Sigmoid colon (tissue), 7 donors: ENCODE measurements at regions of chr10 and their contacts with region 1.

Region 1: GRCh38 chr10:110137142-110137545 is 70.3 kb upstream of the MXI1 start:
- DNase-seq: no peak
- H3K4me3 ChIP-seq: no peak overlapping the region
- H3K27ac ChIP-seq: peak overlapping the region; percentile 34 to 63 (median 52)
- H3K4me1 ChIP-seq: peaks cover 0 to 12% (median 3%) of the 10 kb centered on the region in 4 donors
- H3K27me3 ChIP-seq: no peaks in the 10 kb centered on the region
- CTCF ChIP-seq: peak; percentile 71 to 97 (median 89)
- EP300 ChIP-seq: no peak
- POLR2A ChIP-seq: no peak

Region 2: DNA sequence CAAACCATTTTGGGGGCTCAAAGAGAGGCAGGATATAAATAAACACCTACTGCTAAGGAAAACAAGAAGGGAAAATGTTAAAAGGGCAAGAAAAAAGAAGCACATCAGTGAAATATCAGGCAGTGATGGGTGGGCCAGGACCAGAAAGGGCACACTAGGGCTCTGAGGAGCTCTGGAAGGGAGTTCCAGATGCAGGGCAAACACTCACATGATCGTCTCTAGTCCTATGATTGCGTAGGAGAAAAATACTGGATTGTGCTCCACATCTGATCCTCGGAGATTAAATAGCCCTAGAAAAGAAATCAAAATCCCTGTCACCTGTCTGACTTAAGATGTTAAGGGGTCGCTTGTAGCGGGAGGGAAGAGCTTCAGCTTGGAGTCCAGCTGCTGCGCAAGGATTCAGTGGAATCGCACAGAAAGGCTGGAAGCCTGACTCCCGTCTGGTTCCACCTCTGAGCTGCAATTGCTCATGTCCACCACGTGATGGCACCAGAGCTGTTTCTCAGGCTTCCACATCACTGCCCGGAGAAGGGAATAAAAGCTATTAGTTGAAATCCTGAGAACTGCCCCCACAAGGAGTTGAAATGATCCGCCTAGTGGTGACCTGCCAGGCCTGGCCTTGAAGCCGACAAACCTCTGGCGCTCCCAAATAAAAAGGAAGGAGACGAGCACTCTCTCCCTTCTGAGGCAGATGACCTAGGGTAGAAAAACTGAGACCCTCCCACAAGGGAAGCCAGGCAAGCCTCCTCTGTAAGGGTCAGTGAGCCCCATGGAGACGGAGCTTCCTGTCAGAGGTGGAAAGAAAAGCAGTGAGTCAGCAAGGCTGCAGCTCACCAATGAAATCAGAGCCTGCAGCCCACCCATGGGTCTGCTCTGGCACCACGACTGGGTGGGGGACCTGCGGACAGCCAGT is 253.0 kb before region 1 on chr10:
- intact Hi-C with region 1: loop called (anchors 5 kb)
- DNase-seq: peak; percentile 89
- H3K4me3 ChIP-seq: peak overlapping the region in 2 of 4 donors; percentile 1 to 10
- H3K27ac ChIP-seq: peak overlapping the region; percentile 23 to 55 (median 52)
- H3K4me1 ChIP-seq: peaks cover 0 to 12% (median 8%) of the 10 kb centered on the region in 4 donors
- H3K27me3 ChIP-seq: no peaks in the 10 kb centered on the region
- CTCF ChIP-seq: peak; percentile 80 to 96 (median 93)
- EP300 ChIP-seq: no peak
- POLR2A ChIP-seq: no peak

Region 3: GRCh38 chr10:110016039-110016438 is 121.1 kb before region 1 on chr10:
- intact Hi-C with region 1: loop called (anchors 10 kb)
- DNase-seq: no peak
- H3K4me3 ChIP-seq: no peak overlapping the region
- H3K27ac ChIP-seq: no peak overlapping the region
- H3K4me1 ChIP-seq: peaks cover 0 to 38% (median 19%) of the 10 kb centered on the region in 4 donors
- H3K27me3 ChIP-seq: no peaks in the 10 kb centered on the region
- CTCF ChIP-seq: peak in 2 of 4 experiments; percentile 15 to 30
- EP300 ChIP-seq: no peak
- POLR2A ChIP-seq: no peak

Region 4: DNA sequence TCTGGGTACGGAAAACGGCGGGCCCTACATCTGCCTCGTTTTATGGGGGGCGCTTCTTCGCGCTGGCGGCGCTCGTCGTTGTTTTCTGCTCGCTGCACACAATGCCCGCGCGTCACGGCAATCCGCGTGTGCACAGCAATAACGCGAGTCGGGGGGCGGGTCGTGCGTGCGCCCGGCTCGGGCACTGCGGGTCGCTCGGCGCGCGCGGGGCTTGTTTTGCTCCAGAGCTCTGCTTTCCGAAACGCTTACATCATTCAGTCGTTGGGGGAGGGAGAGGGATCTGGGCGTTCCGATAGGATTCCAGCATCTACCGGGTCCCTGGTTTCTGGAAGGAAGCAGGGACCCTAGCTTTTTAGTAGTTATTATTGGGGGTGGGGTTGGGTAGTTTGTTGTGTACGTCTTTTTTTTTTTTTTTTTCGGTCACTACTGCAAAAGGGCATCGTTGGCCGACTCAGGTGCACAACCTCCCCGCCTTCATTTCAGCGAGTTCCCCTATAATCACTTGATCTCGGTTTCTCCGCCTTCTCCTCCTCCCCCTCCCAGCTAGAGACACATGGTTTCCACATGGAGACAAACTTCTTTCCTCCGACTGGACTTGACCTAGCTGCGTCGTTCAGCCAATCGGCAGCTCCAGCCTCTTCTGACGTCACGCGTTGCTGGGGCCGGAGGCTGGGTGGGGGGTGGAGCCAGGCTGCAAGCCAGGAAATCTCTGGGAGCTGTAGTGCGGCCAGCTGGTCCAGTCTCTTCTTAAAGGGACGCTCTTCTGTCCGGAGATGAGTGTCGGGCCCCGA is 73.7 kb after region 1 on chr10:
- intact Hi-C with region 1: loop called (anchors 1 kb)
- DNase-seq: peak; percentile 99
- H3K4me3 ChIP-seq: peak overlapping the region; percentile 62 to 92 (median 76)
- H3K27ac ChIP-seq: peak overlapping the region; percentile 94 to 100 (median 98)
- H3K4me1 ChIP-seq: peaks cover 0 to 45% (median 35%) of the 10 kb centered on the region in 4 donors
- H3K27me3 ChIP-seq: no peaks in the 10 kb centered on the region
- CTCF ChIP-seq: no peak
- EP300 ChIP-seq: peak in 2 of 4 donors; percentile 39 to 75
- POLR2A ChIP-seq: peak; percentile 73 to 85

Region 5: DNA sequence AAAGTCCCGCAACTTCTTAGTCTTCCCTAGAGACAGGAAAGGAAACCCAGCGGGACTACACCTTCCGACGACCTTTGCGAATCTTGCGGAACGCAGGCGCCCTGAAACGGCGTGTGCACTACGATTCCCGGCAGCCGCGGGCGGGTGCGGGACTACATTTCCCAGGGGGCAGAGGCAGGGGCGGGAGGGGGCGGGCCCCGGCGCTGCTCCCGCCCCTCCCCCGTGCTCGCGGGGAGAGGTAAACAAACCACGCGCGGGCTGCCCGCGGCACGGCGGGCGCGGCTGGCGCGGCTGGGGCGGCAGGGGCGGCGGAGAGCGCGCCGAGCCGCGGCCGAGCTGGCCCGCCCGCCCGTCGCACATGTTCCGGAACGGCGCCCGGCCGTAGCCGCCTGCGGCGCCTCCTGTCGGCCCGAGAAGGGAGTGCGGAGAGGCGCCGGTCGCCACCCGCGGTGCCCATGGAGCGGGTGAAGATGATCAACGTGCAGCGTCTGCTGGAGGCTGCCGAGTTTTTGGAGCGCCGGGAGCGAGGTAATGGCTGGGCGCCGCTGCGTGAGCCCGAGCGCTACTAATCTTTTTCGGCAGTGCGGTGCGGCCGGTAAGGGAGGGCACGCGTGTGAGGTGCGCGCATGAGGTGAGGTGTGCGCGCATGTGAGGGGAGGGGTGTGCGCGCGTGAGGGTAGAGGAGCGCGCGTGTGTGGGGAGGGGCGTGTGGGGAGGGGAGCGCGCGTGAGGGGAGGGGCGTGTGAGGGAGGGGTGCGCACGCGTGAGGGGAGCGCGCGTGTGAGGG is 88.8 kb after region 1 on chr10:
- intact Hi-C with region 1: loop called (anchors 2 kb)
- DNase-seq: peak; percentile 97
- H3K4me3 ChIP-seq: peak overlapping the region; percentile 76 to 87 (median 83)
- H3K27ac ChIP-seq: peak overlapping the region; percentile 92 to 98 (median 96)
- H3K4me1 ChIP-seq: peaks cover 0 to 57% (median 43%) of the 10 kb centered on the region in 4 donors
- H3K27me3 ChIP-seq: no peaks in the 10 kb centered on the region
- CTCF ChIP-seq: peak; percentile 57 to 65 (median 62)
- EP300 ChIP-seq: peak in 1 of 4 donors; percentile 29
- POLR2A ChIP-seq: no peak

Region 6: GRCh38 chr10:110279407-110279986 is 142.4 kb after region 1 on chr10:
- intact Hi-C with region 1: loop called (anchors 1 kb)
- DNase-seq: peak; percentile 72
- H3K4me3 ChIP-seq: peak overlapping the region in 1 of 4 donors; percentile 5
- H3K27ac ChIP-seq: peak overlapping the region in 2 of 4 donors; percentile 25 to 49
- H3K4me1 ChIP-seq: peaks cover 0 to 31% (median 16%) of the 10 kb centered on the region in 4 donors
- H3K27me3 ChIP-seq: no peaks in the 10 kb centered on the region
- CTCF ChIP-seq: peak; percentile 66 to 74 (median 69)
- EP300 ChIP-seq: no peak
- POLR2A ChIP-seq: no peak

Region 7: GRCh38 chr10:110547139-110547761 is 410.1 kb after region 1 on chr10:
- intact Hi-C with region 1: loop called (anchors 5 kb)
- DNase-seq: no peak
- H3K4me3 ChIP-seq: no peak overlapping the region
- H3K27ac ChIP-seq: no peak overlapping the region
- H3K4me1 ChIP-seq: peaks cover 0 to 4% (median 0%) of the 10 kb centered on the region in 4 donors
- H3K27me3 ChIP-seq: no peaks in the 10 kb centered on the region
- CTCF ChIP-seq: peak; percentile 63 to 77 (median 70)
- EP300 ChIP-seq: no peak
- POLR2A ChIP-seq: no peak